Left ventricle myocardium inferior (tissue), 1 donor: ENCODE measurements at regions of chr1 and their contacts with region 1.

Region 1: GRCh38 chr1:32713081-32713480 is 10.5 kb upstream of the SYNC start:
- DNase-seq: no peak
- H3K4me3 ChIP-seq: no peak overlapping the region
- H3K27ac ChIP-seq: no peak overlapping the region
- H3K4me1 ChIP-seq: peaks cover 5% of the 10 kb centered on the region
- H3K27me3 ChIP-seq: no peaks in the 10 kb centered on the region
- CTCF ChIP-seq: no peak

Region 2: GRCh38 chr1:32773018-32773763 is 60.1 kb after region 1 on chr1:
- intact Hi-C with region 1: loop called (anchors 2 kb)
- DNase-seq: peak; percentile 81
- H3K4me3 ChIP-seq: no peak overlapping the region
- H3K27ac ChIP-seq: peak overlapping the region; percentile 19
- H3K4me1 ChIP-seq: peaks cover 6% of the 10 kb centered on the region
- H3K27me3 ChIP-seq: no peaks in the 10 kb centered on the region
- CTCF ChIP-seq: peak; percentile 97